ENCODE measurements at regions of chr14 and their contacts with region 1.

Region 1: GRCh38 chr14:21437063-21437901 is 18.6 kb downstream of the CHD8 start:
- DNase-seq: peak; percentile 99
- H3K4me3 Mint-ChIP-seq: peak overlapping the region; percentile 83
- H3K27ac Mint-ChIP-seq: peak overlapping the region; percentile 93
- H3K4me1 Mint-ChIP-seq: peaks cover 26% of the 10 kb centered on the region
- H3K27me3 Mint-ChIP-seq: no peaks in the 10 kb centered on the region
- CTCF ChIP-seq: no peak

Region 2: DNA sequence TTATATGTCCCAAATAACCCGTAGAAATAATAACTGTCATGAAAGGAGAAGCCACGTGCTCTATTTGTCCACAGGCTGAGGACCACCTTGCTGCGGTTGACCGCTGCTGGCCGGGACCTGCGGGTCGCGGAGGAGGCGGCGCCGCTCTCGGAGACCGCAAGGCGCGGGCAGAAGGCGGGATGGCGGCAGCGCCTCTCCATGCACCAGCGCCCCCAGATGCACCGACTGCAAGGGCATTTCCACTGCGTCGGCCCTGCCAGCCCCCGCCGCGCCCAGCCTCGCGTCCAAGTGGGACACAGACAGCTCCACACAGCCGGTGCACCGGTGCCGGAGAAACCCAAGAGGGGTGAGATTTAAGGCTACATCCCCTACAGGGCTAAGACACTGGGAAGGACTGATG is 136.4 kb before region 1 on chr14:
- CTCF ChIA-PET with region 1: no interaction called
- POLR2A ChIA-PET with region 1: no interaction called
- intact Hi-C with region 1: no loop called
- DNase-seq: no peak
- H3K4me3 Mint-ChIP-seq: no peak overlapping the region
- H3K27ac Mint-ChIP-seq: no peak overlapping the region
- H3K4me1 Mint-ChIP-seq: no peaks in the 10 kb centered on the region
- H3K27me3 Mint-ChIP-seq: no peaks in the 10 kb centered on the region
- CTCF ChIP-seq: no peak

Region 3: DNA sequence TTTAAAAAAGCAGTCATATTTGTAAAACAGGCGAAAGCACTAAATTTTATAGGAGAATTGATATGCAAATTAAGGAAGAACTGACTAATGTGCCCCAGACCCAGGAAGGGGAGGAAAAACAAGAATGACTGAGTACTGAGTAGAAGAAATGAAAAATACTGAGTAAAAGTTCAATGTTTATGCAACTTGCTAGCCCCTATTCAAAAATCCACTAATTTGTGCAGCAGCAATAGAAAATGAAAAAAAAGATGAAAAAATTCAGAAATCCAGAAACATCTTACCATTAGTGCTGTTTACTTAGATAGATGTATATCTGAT is 12.6 kb after region 1 on chr14:
- CTCF ChIA-PET with region 1: interaction called, 60 read pairs
- POLR2A ChIA-PET with region 1: interaction called, 138 read pairs
- intact Hi-C with region 1: loop called (anchors 2 kb)
- DNase-seq: no peak
- H3K4me3 Mint-ChIP-seq: no peak overlapping the region
- H3K27ac Mint-ChIP-seq: no peak overlapping the region
- H3K4me1 Mint-ChIP-seq: peaks cover 30% of the 10 kb centered on the region
- H3K27me3 Mint-ChIP-seq: no peaks in the 10 kb centered on the region
- CTCF ChIP-seq: no peak

Region 4: DNA sequence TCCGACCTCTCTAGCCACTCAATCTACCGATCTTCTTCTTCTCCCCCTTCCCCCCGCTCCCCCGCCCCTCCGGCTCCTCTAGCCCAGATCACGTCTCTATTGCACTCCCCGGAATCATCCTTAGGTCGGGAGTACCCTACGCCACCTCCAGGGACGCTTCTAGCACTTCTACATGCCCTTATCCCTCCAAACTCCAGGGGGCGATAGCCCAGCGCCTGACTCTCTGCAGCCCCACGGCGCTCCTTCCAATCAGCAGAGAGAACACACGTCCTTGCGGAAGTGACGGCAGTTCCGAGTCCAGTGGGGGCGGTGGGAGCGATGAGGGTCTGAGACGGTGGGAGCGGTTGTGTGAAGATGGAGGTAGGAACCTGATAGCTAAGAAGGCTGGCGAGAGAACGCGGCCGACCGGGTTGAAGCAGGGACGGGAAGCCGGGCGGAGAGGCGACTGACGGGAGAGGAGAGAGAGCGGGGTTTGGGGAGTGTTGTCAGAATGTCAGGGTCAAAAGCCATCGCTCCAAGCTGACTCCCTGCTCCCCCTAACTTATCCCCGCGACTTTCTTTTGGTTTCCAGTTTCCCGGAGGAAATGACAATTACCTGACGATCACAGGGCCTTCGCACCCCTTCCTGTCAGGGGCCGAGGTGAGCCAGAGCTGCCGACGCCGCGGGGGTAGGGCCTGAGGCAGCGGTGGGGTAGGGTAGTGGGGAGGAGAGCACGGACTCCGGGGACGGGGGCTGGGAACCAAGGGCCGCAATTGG is 39.8 kb after region 1 on chr14 and contains the starts of genes RAB2B and TOX4:
- CTCF ChIA-PET with region 1: interaction called, 4 read pairs
- POLR2A ChIA-PET with region 1: interaction called, 32 read pairs
- intact Hi-C with region 1: no loop called
- DNase-seq: peak; percentile 99
- H3K4me3 Mint-ChIP-seq: peak within 1 kb of the TSS; percentile 87
- H3K27ac Mint-ChIP-seq: peak within 1 kb of the TSS; percentile 98
- H3K4me1 Mint-ChIP-seq: no peaks in the 10 kb centered on the region
- H3K27me3 Mint-ChIP-seq: no peaks in the 10 kb centered on the region
- CTCF ChIP-seq: peak; percentile 90
- total RNA-seq, gene RAB2B: 22.8 and 23.3 TPM in 2 replicates
- total RNA-seq, gene TOX4: 84.1 and 105 TPM in 2 replicates

Region 5: GRCh38 chr14:21735639-21736307 is 298.5 kb after region 1 on chr14:
- CTCF ChIA-PET with region 1: no interaction called
- POLR2A ChIA-PET with region 1: no interaction called
- intact Hi-C with region 1: no loop called
- DNase-seq: no peak
- H3K4me3 Mint-ChIP-seq: no peak overlapping the region
- H3K27ac Mint-ChIP-seq: no peak overlapping the region
- H3K4me1 Mint-ChIP-seq: no peaks in the 10 kb centered on the region
- H3K27me3 Mint-ChIP-seq: peaks cover 94% of the 10 kb centered on the region
- CTCF ChIP-seq: no peak

Measured in MCF 10A (cell line).